ENCODE measurements at regions of chr15 and their contacts with region 1.

Region 1: GRCh38 chr15:45910671-45911070 is 275.8 kb downstream of the SQOR start:
- DNase-seq: no peak
- ATAC-seq: no peak

Region 2: GRCh38 chr15:45946111-45946510 is 35.4 kb after region 1 on chr15:
- intact Hi-C with region 1: loop called (anchors 2 kb)
- DNase-seq: no peak
- ATAC-seq: no peak

Measured in left ventricle myocardium superior (tissue), 1 donor.